ENCODE measurements at regions of chr2 and their contacts with region 1.

Region 1: GRCh38 chr2:182077451-182078142 is 91.9 kb downstream of the PPP1R1C start:
- H3K4me3 Mint-ChIP-seq: no peak overlapping the region
- H3K27ac Mint-ChIP-seq: no peak overlapping the region
- H3K4me1 Mint-ChIP-seq: peaks cover 10% of the 10 kb centered on the region
- H3K27me3 Mint-ChIP-seq: no peaks in the 10 kb centered on the region

Region 2: DNA sequence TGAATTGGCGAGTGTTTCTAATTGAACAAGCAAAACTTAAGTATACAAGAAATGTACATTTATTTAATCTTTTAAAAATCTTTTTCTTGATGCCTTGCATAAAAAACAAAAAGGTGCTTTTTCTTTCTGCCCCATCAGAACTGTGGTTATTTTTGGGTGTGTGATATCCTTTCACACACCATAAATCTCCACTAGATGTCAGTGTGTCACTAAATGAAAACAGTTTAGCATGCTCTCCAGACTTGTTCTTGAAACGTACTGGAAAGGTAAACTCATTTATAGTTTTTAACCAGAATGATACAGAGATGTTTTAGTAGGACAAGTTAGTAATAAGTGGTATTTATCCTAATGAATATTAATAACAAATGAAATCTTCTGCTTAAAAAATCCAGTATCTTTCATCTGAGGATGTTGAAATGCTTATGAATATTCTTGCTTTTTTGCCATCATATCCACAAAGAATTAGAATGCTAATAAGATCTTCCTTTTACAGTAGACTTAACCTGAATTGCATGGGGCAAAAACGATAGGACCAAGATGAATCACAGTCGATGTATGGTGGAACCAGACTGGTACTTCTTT is 1000.4 kb before region 1 on chr2:
- intact Hi-C with region 1: loop called (anchors 10 kb)
- H3K4me3 Mint-ChIP-seq: no peak overlapping the region
- H3K27ac Mint-ChIP-seq: no peak overlapping the region
- H3K4me1 Mint-ChIP-seq: peaks cover 15% of the 10 kb centered on the region
- H3K27me3 Mint-ChIP-seq: no peaks in the 10 kb centered on the region

Region 3: GRCh38 chr2:181742922-181743722 is 334.5 kb before region 1 on chr2:
- intact Hi-C with region 1: loop called (anchors 1 kb)
- H3K4me3 Mint-ChIP-seq: no peak overlapping the region
- H3K27ac Mint-ChIP-seq: no peak overlapping the region
- H3K4me1 Mint-ChIP-seq: no peaks in the 10 kb centered on the region
- H3K27me3 Mint-ChIP-seq: no peaks in the 10 kb centered on the region

Region 4: GRCh38 chr2:181904022-181904632 is 173.5 kb before region 1 on chr2:
- intact Hi-C with region 1: loop called (anchors 5 kb)
- H3K4me3 Mint-ChIP-seq: no peak overlapping the region
- H3K27ac Mint-ChIP-seq: no peak overlapping the region
- H3K4me1 Mint-ChIP-seq: peaks cover 31% of the 10 kb centered on the region
- H3K27me3 Mint-ChIP-seq: no peaks in the 10 kb centered on the region

Region 5: GRCh38 chr2:181953881-181954537 is 123.6 kb before region 1 on chr2:
- intact Hi-C with region 1: loop called (anchors 5 kb)
- H3K4me3 Mint-ChIP-seq: peak overlapping the region; percentile 28
- H3K27ac Mint-ChIP-seq: no peak overlapping the region
- H3K4me1 Mint-ChIP-seq: no peaks in the 10 kb centered on the region
- H3K27me3 Mint-ChIP-seq: no peaks in the 10 kb centered on the region

Region 6: DNA sequence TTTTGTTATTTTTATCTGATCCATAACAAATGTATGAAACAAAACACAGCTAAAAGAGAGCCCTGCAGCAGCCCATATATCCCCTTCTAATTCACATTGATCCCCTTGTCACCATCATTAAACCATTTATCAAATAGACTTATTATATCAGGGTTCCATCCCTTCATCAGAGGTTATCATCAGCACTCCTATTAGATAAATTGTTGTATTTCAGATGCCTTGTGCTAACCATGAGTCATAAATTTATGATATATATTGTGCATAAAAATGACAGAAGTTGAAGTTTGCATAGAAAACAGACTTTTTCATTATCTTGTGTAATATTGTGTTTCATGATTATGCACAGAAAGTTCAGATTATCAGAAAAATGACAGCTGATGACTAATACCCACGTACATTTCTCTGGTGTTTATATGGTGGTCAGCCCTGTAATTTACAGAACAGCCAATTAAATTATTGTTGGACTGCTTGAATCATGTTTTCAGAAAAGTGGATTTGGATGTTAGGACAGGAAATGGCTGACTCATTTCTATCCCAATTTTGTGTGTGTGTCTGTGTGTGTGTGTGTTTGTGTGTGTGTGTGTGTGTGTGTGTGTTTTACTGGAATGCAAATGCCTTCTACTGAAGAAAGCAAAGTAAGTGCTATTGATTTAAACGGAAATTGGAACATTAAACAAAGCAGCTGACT is 11.1 kb before region 1 on chr2:
- intact Hi-C with region 1: no loop called
- H3K4me3 Mint-ChIP-seq: no peak overlapping the region
- H3K27ac Mint-ChIP-seq: no peak overlapping the region
- H3K4me1 Mint-ChIP-seq: no peaks in the 10 kb centered on the region
- H3K27me3 Mint-ChIP-seq: no peaks in the 10 kb centered on the region

Region 7: DNA sequence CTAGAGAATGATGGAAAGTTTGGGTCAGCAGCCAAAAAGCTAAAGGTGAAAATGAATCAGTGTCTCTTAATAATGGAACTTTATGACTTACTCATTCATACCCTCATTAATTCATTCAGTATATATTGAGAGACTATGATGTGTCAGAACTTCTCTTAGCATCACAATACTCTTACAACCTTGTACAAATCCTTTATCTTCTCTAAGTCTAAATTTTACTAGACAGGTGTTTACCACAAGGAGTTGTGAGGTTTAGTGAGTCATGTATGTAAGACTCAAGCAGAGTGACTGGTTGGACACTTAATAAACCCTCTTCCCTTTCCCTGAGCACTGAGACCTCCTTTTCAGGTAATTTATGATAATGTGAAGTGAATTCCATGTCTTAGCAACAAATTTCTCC is 37.7 kb after region 1 on chr2:
- intact Hi-C with region 1: no loop called
- H3K4me3 Mint-ChIP-seq: no peak overlapping the region
- H3K27ac Mint-ChIP-seq: no peak overlapping the region
- H3K4me1 Mint-ChIP-seq: no peaks in the 10 kb centered on the region
- H3K27me3 Mint-ChIP-seq: no peaks in the 10 kb centered on the region

Measured in dendritic cell treated with granulocyte-macrophage colony-stimulating factor and Interleukin-4, amounts not matched to agents 40 ng/mL and 50 ng/mL, for 4 days (primary cell).